ENCODE measurements at regions of chr13 and their contacts with region 1.

Region 1: GRCh38 chr13:41652727-41653361 is 195.5 kb downstream of the RGCC start:
- DNase-seq: no peak
- ATAC-seq: no peak

Region 2: GRCh38 chr13:41352935-41353840 is 299.7 kb before region 1 on chr13:
- intact Hi-C with region 1: loop called in 1 of 2 experiments (anchors 5 kb)
- DNase-seq: peak in 1 of 2 donors; percentile 16
- ATAC-seq: no peak

Region 3: GRCh38 chr13:41492404-41493260 is 160.2 kb before region 1 on chr13:
- intact Hi-C with region 1: no loop called
- DNase-seq: no peak
- ATAC-seq: no peak

Region 4: GRCh38 chr13:42247883-42248282 is 595.0 kb after region 1 on chr13:
- intact Hi-C with region 1: no loop called
- DNase-seq: no peak
- ATAC-seq: no peak

Measured in left colon (tissue), 2 donors.